H1 (cell line): ENCODE measurements at regions of chr3 and their contacts with region 1.

Region 1: GRCh38 chr3:152471814-152472671 is 203.3 kb downstream of the MBNL1 start:
- DNase-seq: peak in 1 of 2 experiments; percentile 69
- H3K4me3 ChIP-seq: no peak overlapping the region; a peak in 1 of 8 replicates
- H3K27ac ChIP-seq: no peak overlapping the region
- H3K4me1 ChIP-seq: no peaks in the 10 kb centered on the region
- H3K27me3 ChIP-seq: no peaks in the 10 kb centered on the region
- CTCF ChIP-seq: peak; percentile 23 to 68 (median 53)
- EP300 ChIP-seq: no peak
- POLR2A ChIP-seq: no peak
- RAD21 ChIP-seq: peak; percentile 58 to 65

Region 2: DNA sequence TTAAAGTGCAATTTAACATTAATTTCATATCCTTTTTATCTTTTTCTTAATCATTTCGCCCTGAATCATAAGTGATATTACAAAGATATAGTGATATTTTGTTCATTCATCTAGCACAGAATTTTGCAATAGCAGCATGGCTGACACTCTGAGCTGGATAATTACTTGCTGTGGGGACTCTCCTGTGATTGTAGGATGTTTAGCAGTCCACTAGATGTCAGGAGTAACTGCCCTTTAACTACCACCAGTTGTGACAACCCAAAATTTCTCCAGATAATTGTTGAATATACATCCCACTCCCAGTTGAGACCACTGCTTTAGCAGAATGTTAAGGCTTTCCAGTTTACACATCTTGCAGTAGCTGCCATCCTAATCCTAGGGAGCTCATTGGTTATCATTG is 400.1 kb before region 1 on chr3:
- CTCF ChIA-PET with region 1: interaction called, 11 read pairs
- POLR2A ChIA-PET with region 1: no interaction called
- DNase-seq: no peak
- H3K4me3 ChIP-seq: no peak overlapping the region
- H3K27ac ChIP-seq: no peak overlapping the region
- H3K4me1 ChIP-seq: no peaks in the 10 kb centered on the region
- H3K27me3 ChIP-seq: no peaks in the 10 kb centered on the region
- CTCF ChIP-seq: peak in 2 of 3 experiments; percentile 61 to 66; a peak in 3 of 4 replicates
- EP300 ChIP-seq: no peak
- POLR2A ChIP-seq: no peak
- RAD21 ChIP-seq: peak; percentile 74 to 85

Region 3: DNA sequence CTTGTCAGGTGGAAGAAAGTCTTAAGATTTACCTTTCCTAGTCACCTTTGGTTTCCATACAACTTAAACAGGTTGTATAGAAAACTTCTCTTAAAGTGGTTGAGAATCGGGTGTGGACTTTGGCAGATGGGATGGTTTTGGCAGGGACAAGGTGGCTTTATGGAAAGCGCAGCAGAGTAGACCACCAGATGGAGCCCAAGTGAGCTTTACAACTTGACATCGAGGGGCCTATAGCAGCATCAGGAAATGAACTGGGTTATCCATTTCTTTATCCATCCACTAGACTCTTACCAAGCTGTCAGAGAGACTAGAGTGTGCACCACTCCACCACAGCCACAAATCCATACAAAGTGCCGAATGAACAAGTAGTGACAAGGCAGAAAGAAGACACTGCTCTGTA is 288.6 kb before region 1 on chr3:
- CTCF ChIA-PET with region 1: interaction called, 10 read pairs
- POLR2A ChIA-PET with region 1: no interaction called
- DNase-seq: peak in 1 of 2 experiments; percentile 53
- H3K4me3 ChIP-seq: no peak overlapping the region
- H3K27ac ChIP-seq: no peak overlapping the region
- H3K4me1 ChIP-seq: no peaks in the 10 kb centered on the region
- H3K27me3 ChIP-seq: peaks cover 0 to 1% (median 0%) of the 10 kb centered on the region in 4 experiments; a peak in 1 of 7 replicates
- CTCF ChIP-seq: peak; percentile 57 to 77 (median 67)
- EP300 ChIP-seq: no peak
- POLR2A ChIP-seq: no peak
- RAD21 ChIP-seq: peak; percentile 77 to 81

Region 4: GRCh38 chr3:152416808-152417580 is 55.0 kb before region 1 on chr3:
- CTCF ChIA-PET with region 1: no interaction called
- POLR2A ChIA-PET with region 1: no interaction called
- DNase-seq: no peak
- H3K4me3 ChIP-seq: no peak overlapping the region
- H3K27ac ChIP-seq: no peak overlapping the region
- H3K4me1 ChIP-seq: no peaks in the 10 kb centered on the region
- H3K27me3 ChIP-seq: no peaks in the 10 kb centered on the region
- CTCF ChIP-seq: no peak
- EP300 ChIP-seq: no peak
- POLR2A ChIP-seq: no peak
- RAD21 ChIP-seq: no peak

Region 5: DNA sequence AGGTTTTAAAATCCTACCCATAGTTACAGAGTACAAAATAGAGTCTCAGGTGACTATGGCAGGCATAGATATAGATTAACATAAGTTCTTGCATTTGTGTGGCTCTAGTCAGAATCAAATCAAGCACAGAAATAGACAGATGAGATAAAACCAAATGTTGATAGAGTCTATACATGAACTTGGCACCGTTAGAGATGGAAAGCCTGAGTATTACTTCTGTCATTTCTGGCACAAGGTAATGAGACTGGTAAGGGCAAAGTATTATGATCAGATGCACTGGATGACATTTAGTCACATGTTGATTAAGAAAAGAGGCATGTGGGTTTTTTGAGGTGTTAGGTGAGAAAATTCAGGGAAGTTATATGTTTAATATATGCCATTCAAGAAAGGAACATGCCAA is 16.4 kb after region 1 on chr3:
- CTCF ChIA-PET with region 1: interaction called, 11 read pairs
- POLR2A ChIA-PET with region 1: no interaction called
- DNase-seq: no peak
- H3K4me3 ChIP-seq: no peak overlapping the region
- H3K27ac ChIP-seq: no peak overlapping the region
- H3K4me1 ChIP-seq: no peaks in the 10 kb centered on the region
- H3K27me3 ChIP-seq: peaks cover 0 to 1% (median 0%) of the 10 kb centered on the region in 4 experiments; a peak in 1 of 7 replicates
- CTCF ChIP-seq: no peak
- EP300 ChIP-seq: no peak
- POLR2A ChIP-seq: no peak
- RAD21 ChIP-seq: no peak

Region 6: GRCh38 chr3:152508705-152509104 is 36.7 kb after region 1 on chr3:
- CTCF ChIA-PET with region 1: interaction called, 22 read pairs
- POLR2A ChIA-PET with region 1: no interaction called
- DNase-seq: no peak
- H3K4me3 ChIP-seq: no peak overlapping the region
- H3K27ac ChIP-seq: no peak overlapping the region
- H3K4me1 ChIP-seq: no peaks in the 10 kb centered on the region
- H3K27me3 ChIP-seq: no peaks in the 10 kb centered on the region
- CTCF ChIP-seq: peak in 1 of 3 experiments; percentile 18; a peak in 2 of 4 replicates
- EP300 ChIP-seq: no peak
- POLR2A ChIP-seq: no peak
- RAD21 ChIP-seq: peak; percentile 36 to 51

Region 7: GRCh38 chr3:152524198-152525140 is 52.4 kb after region 1 on chr3:
- CTCF ChIA-PET with region 1: interaction called, 10 read pairs
- POLR2A ChIA-PET with region 1: no interaction called
- DNase-seq: no peak
- H3K4me3 ChIP-seq: no peak overlapping the region
- H3K27ac ChIP-seq: no peak overlapping the region
- H3K4me1 ChIP-seq: no peaks in the 10 kb centered on the region
- H3K27me3 ChIP-seq: no peaks in the 10 kb centered on the region
- CTCF ChIP-seq: peak in 2 of 3 experiments; percentile 32 to 75; a peak in 2 of 4 replicates
- EP300 ChIP-seq: no peak
- POLR2A ChIP-seq: no peak
- RAD21 ChIP-seq: peak; percentile 64 to 65

Region 8: DNA sequence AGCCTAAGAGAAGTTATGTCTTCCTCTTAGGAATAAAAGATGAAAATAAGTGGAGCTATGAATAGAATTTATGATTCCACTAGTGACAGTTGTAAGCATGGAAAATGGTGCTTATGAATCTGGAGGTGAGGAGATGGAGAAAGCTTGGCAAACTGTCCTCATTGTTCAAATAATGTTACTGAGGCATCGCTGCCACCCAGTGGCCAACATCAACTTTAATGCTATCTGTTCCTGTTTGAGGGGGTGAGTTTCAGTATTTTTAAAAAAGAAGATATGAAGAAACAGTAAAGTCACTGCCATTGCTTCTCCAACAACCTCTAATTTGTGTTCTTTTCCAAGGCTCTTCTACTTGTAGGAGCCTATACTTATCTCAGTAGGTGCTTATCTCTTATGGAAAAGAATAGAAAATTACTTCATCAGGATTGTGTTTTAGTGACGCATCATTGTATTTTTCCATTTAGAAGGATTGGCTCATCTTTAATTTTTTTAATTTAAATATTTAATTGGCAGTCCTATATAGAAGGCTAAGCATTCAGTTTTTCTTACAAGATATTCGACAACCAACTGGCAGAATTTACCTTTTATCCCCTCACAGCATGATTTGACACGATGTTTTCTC is 102.5 kb after region 1 on chr3:
- CTCF ChIA-PET with region 1: interaction called, 31 read pairs
- POLR2A ChIA-PET with region 1: no interaction called
- DNase-seq: no peak
- H3K4me3 ChIP-seq: no peak overlapping the region
- H3K27ac ChIP-seq: no peak overlapping the region
- H3K4me1 ChIP-seq: no peaks in the 10 kb centered on the region
- H3K27me3 ChIP-seq: no peaks in the 10 kb centered on the region
- CTCF ChIP-seq: peak in 2 of 3 experiments; percentile 56 to 59; a peak in 3 of 4 replicates
- EP300 ChIP-seq: no peak
- POLR2A ChIP-seq: no peak
- RAD21 ChIP-seq: peak; percentile 79 to 80

Region 9: GRCh38 chr3:152797751-152798432 is 325.8 kb after region 1 on chr3:
- CTCF ChIA-PET with region 1: no interaction called
- POLR2A ChIA-PET with region 1: no interaction called
- DNase-seq: no peak
- H3K4me3 ChIP-seq: no peak overlapping the region
- H3K27ac ChIP-seq: no peak overlapping the region
- H3K4me1 ChIP-seq: no peaks in the 10 kb centered on the region
- H3K27me3 ChIP-seq: no peaks in the 10 kb centered on the region
- CTCF ChIP-seq: no peak
- EP300 ChIP-seq: no peak
- POLR2A ChIP-seq: no peak
- RAD21 ChIP-seq: no peak